Activated CD4-positive, alpha-beta memory T cell treated with anti-CD3 and anti-CD28 coated beads for 36 hours (primary cell): ENCODE measurements at regions of chr9 and their contacts with region 1.

Region 1: DNA sequence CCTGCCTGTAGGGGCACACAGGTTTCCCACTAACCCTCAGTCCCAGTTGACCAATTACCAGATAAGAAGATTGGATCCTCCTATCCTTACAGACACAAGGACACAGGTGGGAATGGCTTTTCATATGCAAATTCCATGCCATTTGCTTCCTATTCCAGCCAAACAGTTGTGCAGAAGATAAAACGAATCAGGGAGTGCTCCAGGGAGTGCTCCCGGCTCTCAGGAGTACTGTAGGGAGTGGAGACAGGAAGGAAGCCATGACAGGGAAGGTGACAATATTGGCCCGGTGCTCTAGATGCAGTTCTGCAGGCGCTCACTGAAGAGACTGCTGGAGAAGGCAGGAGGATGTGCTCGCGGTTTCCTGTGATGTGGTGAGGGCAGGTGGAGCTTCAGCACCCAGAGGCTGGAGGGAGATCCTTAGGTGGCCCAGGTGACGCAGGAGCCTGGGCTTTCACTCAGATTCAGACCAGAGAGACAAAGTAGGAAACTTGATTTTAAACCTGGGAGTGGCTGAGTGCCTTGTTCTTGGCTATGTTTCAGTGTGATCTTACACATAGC is 260.0 kb downstream of the AUH start:
- DNase-seq: peak; percentile 95
- H3K4me3 Mint-ChIP-seq: peak overlapping the region; percentile 73
- H3K27ac Mint-ChIP-seq: peak overlapping the region; percentile 93
- H3K4me1 Mint-ChIP-seq: peaks cover 56% of the 10 kb centered on the region
- H3K27me3 Mint-ChIP-seq: peaks cover 5% of the 10 kb centered on the region

Region 2: DNA sequence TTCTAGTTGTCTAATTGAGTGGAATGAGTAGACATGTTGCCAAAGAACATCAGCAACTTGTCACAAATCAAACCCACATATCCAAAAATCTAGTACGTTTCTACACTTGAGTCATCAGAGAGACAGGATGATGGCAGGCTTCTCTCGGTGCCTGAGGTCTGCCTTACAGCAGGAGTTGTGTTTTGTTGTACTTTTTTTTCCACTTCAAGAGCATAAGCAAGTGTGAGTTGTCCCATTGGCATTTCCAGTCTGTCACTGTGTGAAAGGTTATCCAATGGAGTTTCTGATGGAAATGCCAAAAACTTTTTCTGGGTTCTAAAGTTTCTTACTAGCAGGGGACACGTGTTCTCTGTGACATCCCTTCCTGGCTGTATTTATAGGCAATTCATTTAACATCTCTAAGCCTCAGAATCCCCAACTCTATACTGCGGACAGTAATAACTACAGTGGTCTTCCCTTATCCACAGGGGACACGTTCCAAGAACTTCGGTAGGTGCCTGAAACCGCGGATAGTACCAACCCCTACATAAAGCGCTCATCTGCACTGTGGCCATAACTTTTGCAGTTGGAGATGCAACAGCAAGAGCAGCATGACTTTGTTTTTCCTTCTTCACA is 53.6 kb before region 1 on chr9:
- CTCF ChIA-PET with region 1: no interaction called
- POLR2A ChIA-PET with region 1: no interaction called
- intact Hi-C with region 1: loop called (anchors 1 kb)
- DNase-seq: peak; percentile 73
- H3K4me3 Mint-ChIP-seq: no peak overlapping the region
- H3K27ac Mint-ChIP-seq: peak overlapping the region; percentile 83
- H3K4me1 Mint-ChIP-seq: peaks cover 58% of the 10 kb centered on the region
- H3K27me3 Mint-ChIP-seq: peaks cover 40% of the 10 kb centered on the region

Region 3: GRCh38 chr9:91071185-91071990 is 30.3 kb before region 1 on chr9:
- CTCF ChIA-PET with region 1: interaction called, 12 read pairs
- POLR2A ChIA-PET with region 1: interaction called, 29 read pairs
- intact Hi-C with region 1: loop called (anchors 1 kb)
- DNase-seq: peak; percentile 88
- H3K4me3 Mint-ChIP-seq: peak overlapping the region; percentile 9
- H3K27ac Mint-ChIP-seq: peak overlapping the region; percentile 85
- H3K4me1 Mint-ChIP-seq: peaks cover 18% of the 10 kb centered on the region
- H3K27me3 Mint-ChIP-seq: peaks cover 7% of the 10 kb centered on the region

Region 4: GRCh38 chr9:91089405-91090129 is 12.1 kb before region 1 on chr9:
- CTCF ChIA-PET with region 1: interaction called, 20 read pairs
- POLR2A ChIA-PET with region 1: interaction called, 13 read pairs
- intact Hi-C with region 1: no loop called
- DNase-seq: peak; percentile 45
- H3K4me3 Mint-ChIP-seq: no peak overlapping the region
- H3K27ac Mint-ChIP-seq: peak overlapping the region; percentile 35
- H3K4me1 Mint-ChIP-seq: peaks cover 40% of the 10 kb centered on the region
- H3K27me3 Mint-ChIP-seq: no peaks in the 10 kb centered on the region